ENCODE measurements at regions of chr1 and their contacts with region 1.

Region 1: DNA sequence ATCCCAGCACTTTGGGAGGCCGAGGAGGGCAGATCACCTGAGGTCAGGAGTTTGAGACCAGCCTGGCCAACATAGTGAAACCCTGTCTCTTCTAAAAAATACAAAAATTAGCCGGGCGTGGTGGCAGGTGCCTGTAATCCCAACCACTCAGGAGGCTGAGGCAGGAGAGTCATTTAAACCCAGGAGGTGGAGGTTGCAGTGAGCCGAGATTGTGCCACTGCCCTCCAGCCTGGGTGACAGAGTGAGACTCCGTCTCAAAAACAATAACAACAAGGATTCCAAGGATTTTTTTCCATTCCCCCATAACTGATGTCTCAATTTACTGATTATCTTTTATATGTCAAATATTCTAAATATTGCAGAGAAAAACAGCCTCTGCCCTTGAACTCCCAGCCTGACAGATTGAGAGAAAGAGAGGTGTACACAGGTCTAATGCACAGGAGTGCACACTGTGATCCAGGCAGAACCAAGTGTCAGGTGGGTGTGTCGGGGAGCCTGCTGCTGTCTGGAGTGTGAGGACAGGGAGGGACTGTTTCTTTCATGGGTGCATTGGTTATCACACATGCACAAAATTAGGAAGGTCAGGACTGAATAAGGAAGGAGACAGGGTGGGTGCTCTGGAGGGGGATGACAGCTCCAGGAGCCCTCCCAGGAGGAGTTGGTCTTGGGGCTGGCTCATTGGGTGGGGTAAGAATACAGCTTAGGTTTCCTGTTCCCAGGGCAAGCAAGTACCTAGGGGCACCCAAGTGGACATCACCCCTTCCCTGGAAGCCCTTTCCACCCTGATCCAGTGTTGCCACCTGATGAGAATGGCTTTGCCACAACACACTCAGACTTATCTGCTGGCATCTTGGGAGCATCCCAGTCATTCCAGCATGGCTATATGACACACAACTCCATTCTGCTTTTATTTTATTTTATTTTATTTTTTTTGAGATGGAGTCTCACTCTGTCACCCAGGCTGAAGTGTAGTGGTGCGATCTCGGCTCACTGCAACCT is 13.3 kb upstream of the PINK1 start:
- DNase-seq: no peak
- ATAC-seq: no peak
- H3K4me3 ChIP-seq: no peak overlapping the region
- H3K27ac ChIP-seq: no peak overlapping the region
- H3K4me1 ChIP-seq: peaks cover 10 to 14% of the 10 kb centered on the region in 2 donors
- H3K27me3 ChIP-seq: no peaks in the 10 kb centered on the region
- CTCF ChIP-seq: no peak
- POLR2A ChIP-seq: no peak

Region 2: DNA sequence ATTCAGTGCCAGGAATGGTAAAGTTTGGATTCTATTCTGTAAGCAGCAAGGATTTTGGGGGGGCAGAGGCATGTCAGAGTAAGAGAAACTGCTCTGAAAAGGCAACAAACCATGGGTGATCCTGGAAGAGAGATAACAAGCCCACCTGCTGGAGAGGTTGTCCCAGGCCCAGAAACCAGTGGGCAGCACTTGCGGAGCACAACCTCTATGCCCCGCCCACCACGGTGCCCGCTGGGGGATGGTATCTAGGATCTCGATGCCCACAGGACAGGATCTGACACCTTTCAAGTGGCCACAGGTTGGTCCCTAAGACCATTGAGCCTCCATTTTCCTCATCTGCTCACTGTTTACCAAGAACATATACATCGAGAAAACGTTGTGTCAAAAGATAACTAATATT is 91.7 kb before region 1 on chr1:
- in situ Hi-C with region 1: loop called in 1 of 4 experiments (anchors 5 kb)
- intact Hi-C with region 1: no loop called
- DNase-seq: no peak
- ATAC-seq: no peak
- H3K4me3 ChIP-seq: no peak overlapping the region
- H3K27ac ChIP-seq: no peak overlapping the region
- H3K4me1 ChIP-seq: no peaks in the 10 kb centered on the region
- H3K27me3 ChIP-seq: peaks cover 0 to 10% (median 0%) of the 10 kb centered on the region in 3 donors
- CTCF ChIP-seq: no peak
- POLR2A ChIP-seq: no peak

Region 3: GRCh38 chr1:20661207-20662109 is 41.5 kb after region 1 on chr1 and contains the start of gene DDOST:
- in situ Hi-C with region 1: no loop called
- intact Hi-C with region 1: loop called (anchors 1 kb)
- DNase-seq: peak; percentile 93 to 95
- ATAC-seq: peak; percentile 96 to 98
- H3K4me3 ChIP-seq: peak within 1 kb of the TSS; percentile 81 to 99 (median 90)
- H3K27ac ChIP-seq: peak within 1 kb of the TSS; percentile 80 to 90 (median 87)
- H3K4me1 ChIP-seq: peaks cover 36 to 43% of the 10 kb centered on the region in 2 donors
- H3K27me3 ChIP-seq: no peaks in the 10 kb centered on the region
- CTCF ChIP-seq: peak in 3 of 5 experiments; percentile 29 to 56 (median 52)
- POLR2A ChIP-seq: peak; percentile 38 to 65
- total RNA-seq, gene DDOST: 63.0 to 110 (median 99.8) TPM